AG04449 (cell line): ENCODE measurements at regions of chr15 and their contacts with region 1.

Region 1: GRCh38 chr15:89416141-89416853 is 80.1 kb downstream of the RHCG start:
- DNase-seq: no peak
- H3K4me3 ChIP-seq: no peak overlapping the region
- CTCF ChIP-seq: peak; percentile 74

Region 2: GRCh38 chr15:89442671-89443307 is 26.5 kb after region 1 on chr15:
- CTCF ChIA-PET with region 1: interaction called, 12 read pairs
- POLR2A ChIA-PET with region 1: no interaction called
- DNase-seq: no peak
- H3K4me3 ChIP-seq: no peak overlapping the region
- CTCF ChIP-seq: peak; percentile 57